ENCODE measurements at regions of chr17 and their contacts with region 1.

Region 1: DNA sequence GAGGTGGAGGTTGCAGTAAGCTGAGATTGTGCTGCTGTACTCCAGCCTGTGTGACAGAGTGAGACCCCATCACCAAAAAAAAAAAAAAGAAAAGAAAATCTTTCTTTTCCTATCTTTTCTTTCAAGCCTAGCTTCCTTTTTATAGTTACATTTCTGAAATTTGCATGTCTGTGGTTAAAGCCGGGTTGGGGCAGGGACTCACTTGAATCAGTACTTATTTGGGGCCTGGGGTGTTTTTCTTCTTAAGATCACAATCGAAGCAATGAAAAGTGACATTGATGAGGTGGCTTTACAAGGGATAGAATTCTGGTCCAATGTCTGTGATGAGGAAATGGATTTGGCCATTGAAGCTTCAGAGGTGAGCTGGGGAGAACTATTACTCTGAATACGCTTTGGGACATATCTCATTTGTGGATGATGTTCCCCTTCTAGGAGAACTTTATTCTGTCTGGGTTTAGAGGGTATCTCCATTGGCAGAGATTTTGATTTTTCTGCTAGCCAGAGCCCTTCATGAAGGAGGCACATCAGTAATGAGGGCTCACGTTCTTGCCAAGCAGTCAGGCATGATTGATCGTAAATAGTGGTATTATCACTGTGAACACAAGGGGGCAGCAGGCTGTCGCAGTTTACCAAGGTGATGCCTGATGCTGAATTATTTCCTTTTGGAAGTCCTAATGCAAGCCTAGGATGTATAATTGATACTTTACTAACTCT is 14.3 kb downstream of the KPNB1 start:
- DNase-seq: peak; percentile 73
- ATAC-seq: peak; percentile 65
- H3K4me3 Mint-ChIP-seq: no peak overlapping the region
- H3K27ac Mint-ChIP-seq: peak overlapping the region; percentile 83
- H3K4me1 Mint-ChIP-seq: peaks cover 28% of the 10 kb centered on the region
- H3K27me3 Mint-ChIP-seq: no peaks in the 10 kb centered on the region

Region 2: GRCh38 chr17:47687748-47688147 is 23.7 kb after region 1 on chr17:
- CTCF ChIA-PET with region 1: interaction called, 14 read pairs
- POLR2A ChIA-PET with region 1: interaction called, 5 read pairs
- intact Hi-C with region 1: no loop called
- DNase-seq: no peak
- ATAC-seq: peak; percentile 18
- H3K4me3 Mint-ChIP-seq: no peak overlapping the region
- H3K27ac Mint-ChIP-seq: no peak overlapping the region
- H3K4me1 Mint-ChIP-seq: peaks cover 27% of the 10 kb centered on the region
- H3K27me3 Mint-ChIP-seq: no peaks in the 10 kb centered on the region

Region 3: GRCh38 chr17:47733047-47733673 is 69.1 kb after region 1 on chr17 and contains the start of gene TBX21:
- CTCF ChIA-PET with region 1: interaction called, 7 read pairs
- POLR2A ChIA-PET with region 1: interaction called, 6 read pairs
- intact Hi-C with region 1: loop called (anchors 2 to 5 kb)
- DNase-seq: peak; percentile 96
- ATAC-seq: peak; percentile 80
- H3K4me3 Mint-ChIP-seq: peak within 1 kb of the TSS; percentile 93
- H3K27ac Mint-ChIP-seq: peak within 1 kb of the TSS; percentile 98
- H3K4me1 Mint-ChIP-seq: peaks cover 63% of the 10 kb centered on the region
- H3K27me3 Mint-ChIP-seq: no peaks in the 10 kb centered on the region
- total RNA-seq, gene TBX21: 73.4 to 76.8 TPM

Region 4: GRCh38 chr17:47789611-47790561 is 125.8 kb after region 1 on chr17:
- CTCF ChIA-PET with region 1: interaction called, 5 read pairs
- POLR2A ChIA-PET with region 1: no interaction called
- intact Hi-C with region 1: loop called in 1 of 2 experiments (anchors 1 kb)
- DNase-seq: peak; percentile 80
- ATAC-seq: peak; percentile 97
- H3K4me3 Mint-ChIP-seq: peak overlapping the region; percentile 63
- H3K27ac Mint-ChIP-seq: no peak overlapping the region
- H3K4me1 Mint-ChIP-seq: peaks cover 10% of the 10 kb centered on the region
- H3K27me3 Mint-ChIP-seq: peaks cover 47% of the 10 kb centered on the region

Region 5: GRCh38 chr17:47970704-47971463 is 306.8 kb after region 1 on chr17 and contains the start of gene CDK5RAP3:
- CTCF ChIA-PET with region 1: no interaction called
- POLR2A ChIA-PET with region 1: no interaction called
- intact Hi-C with region 1: no loop called
- DNase-seq: peak; percentile 100
- ATAC-seq: peak; percentile 100
- H3K4me3 Mint-ChIP-seq: peak within 1 kb of the TSS; percentile 97
- H3K27ac Mint-ChIP-seq: peak within 1 kb of the TSS; percentile 94
- H3K4me1 Mint-ChIP-seq: peaks cover 21% of the 10 kb centered on the region
- H3K27me3 Mint-ChIP-seq: no peaks in the 10 kb centered on the region
- total RNA-seq, gene CDK5RAP3: 147 to 156 TPM

Measured in activated CD4-positive, alpha-beta T cell treated with anti-CD3 and anti-CD28 coated beads for 36 hours (primary cell).